Activated naive CD8-positive, alpha-beta T cell treated with anti-CD3 and anti-CD28 coated beads, Interleukin-2, amount 10 ng/mL, durations not matched to agents 7 days and 5 days (primary cell): ENCODE measurements at regions of chr1 and their contacts with region 1.

Region 1: GRCh38 chr1:37474046-37474759 is at the start of gene ZC3H12A:
- DNase-seq: peak; percentile 99
- ATAC-seq: peak; percentile 62
- H3K4me3 Mint-ChIP-seq: peak within 1 kb of the TSS; percentile 99
- H3K27ac Mint-ChIP-seq: peak within 1 kb of the TSS; percentile 98
- H3K4me1 Mint-ChIP-seq: peaks cover 49% of the 10 kb centered on the region
- H3K27me3 Mint-ChIP-seq: no peaks in the 10 kb centered on the region
- total RNA-seq, gene ZC3H12A: 31.0 to 34.6 TPM

Region 2: GRCh38 chr1:37442139-37442538 is 32.1 kb before region 1 on chr1:
- POLR2A ChIA-PET with region 1: no interaction called
- DNase-seq: no peak
- ATAC-seq: no peak
- H3K4me3 Mint-ChIP-seq: no peak overlapping the region
- H3K27ac Mint-ChIP-seq: no peak overlapping the region
- H3K4me1 Mint-ChIP-seq: no peaks in the 10 kb centered on the region
- H3K27me3 Mint-ChIP-seq: peaks cover 22% of the 10 kb centered on the region

Region 3: GRCh38 chr1:37458528-37458927 is 15.7 kb before region 1 on chr1:
- POLR2A ChIA-PET with region 1: interaction called, 17 read pairs
- DNase-seq: no peak
- ATAC-seq: no peak
- H3K4me3 Mint-ChIP-seq: no peak overlapping the region
- H3K27ac Mint-ChIP-seq: no peak overlapping the region
- H3K4me1 Mint-ChIP-seq: peaks cover 9% of the 10 kb centered on the region
- H3K27me3 Mint-ChIP-seq: no peaks in the 10 kb centered on the region

Region 4: GRCh38 chr1:37486680-37487618 is 12.7 kb after region 1 on chr1:
- POLR2A ChIA-PET with region 1: interaction called, 71 read pairs
- DNase-seq: peak; percentile 88
- ATAC-seq: peak; percentile 50
- H3K4me3 Mint-ChIP-seq: no peak overlapping the region
- H3K27ac Mint-ChIP-seq: peak overlapping the region; percentile 71
- H3K4me1 Mint-ChIP-seq: peaks cover 11% of the 10 kb centered on the region
- H3K27me3 Mint-ChIP-seq: no peaks in the 10 kb centered on the region

Region 5: GRCh38 chr1:37514350-37515184 is 40.4 kb after region 1 on chr1 and contains the start of gene MEAF6:
- POLR2A ChIA-PET with region 1: interaction called, 32 read pairs
- DNase-seq: peak; percentile 93
- ATAC-seq: peak; percentile 93
- H3K4me3 Mint-ChIP-seq: peak within 1 kb of the TSS; percentile 96
- H3K27ac Mint-ChIP-seq: peak within 1 kb of the TSS; percentile 96
- H3K4me1 Mint-ChIP-seq: peaks cover 37% of the 10 kb centered on the region
- H3K27me3 Mint-ChIP-seq: no peaks in the 10 kb centered on the region
- total RNA-seq, gene MEAF6: 73.8 to 80.6 TPM

Region 6: GRCh38 chr1:37519613-37520012 is 45.4 kb after region 1 on chr1:
- POLR2A ChIA-PET with region 1: interaction called, 32 read pairs
- DNase-seq: no peak
- ATAC-seq: peak; percentile 23
- H3K4me3 Mint-ChIP-seq: peak overlapping the region; percentile 89
- H3K27ac Mint-ChIP-seq: peak overlapping the region; percentile 96
- H3K4me1 Mint-ChIP-seq: peaks cover 22% of the 10 kb centered on the region
- H3K27me3 Mint-ChIP-seq: no peaks in the 10 kb centered on the region

Region 7: GRCh38 chr1:37692078-37692833 is 218.1 kb after region 1 on chr1 and contains the start of gene CDCA8:
- POLR2A ChIA-PET with region 1: interaction called, 12 read pairs
- DNase-seq: peak; percentile 97
- ATAC-seq: peak; percentile 86
- H3K4me3 Mint-ChIP-seq: peak within 1 kb of the TSS; percentile 89
- H3K27ac Mint-ChIP-seq: peak within 1 kb of the TSS; percentile 92
- H3K4me1 Mint-ChIP-seq: peaks cover 35% of the 10 kb centered on the region
- H3K27me3 Mint-ChIP-seq: no peaks in the 10 kb centered on the region
- total RNA-seq, gene CDCA8: 64.7 to 67.0 TPM